Panc1 (cell line): ENCODE measurements at regions of chr12 and their contacts with region 1.

Region 1: DNA sequence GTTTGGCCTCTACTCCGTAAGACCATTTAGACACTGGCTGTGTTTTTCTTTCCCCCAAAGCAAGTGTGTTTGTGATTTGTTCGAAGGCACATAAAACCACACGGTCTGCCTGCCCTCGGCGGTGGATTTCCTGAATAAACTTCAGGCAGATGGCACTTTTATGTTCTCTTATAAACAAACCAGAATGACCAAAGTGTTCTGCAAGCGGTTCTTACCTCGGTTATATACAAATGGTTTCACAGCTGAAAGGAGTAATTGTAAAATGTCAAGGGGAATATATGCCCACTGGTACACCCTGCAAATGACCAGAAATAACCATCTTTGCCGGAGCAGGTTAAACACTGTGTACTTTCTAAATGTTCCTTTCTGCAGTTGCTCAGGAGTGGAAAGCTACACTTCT is 1475.8 kb upstream of the TMEM132C start:
- DNase-seq: no peak
- ATAC-seq: no peak
- H3K4me3 ChIP-seq: no peak overlapping the region
- H3K27ac ChIP-seq: no peak overlapping the region
- H3K4me1 ChIP-seq: no peaks in the 10 kb centered on the region
- H3K27me3 ChIP-seq: no peaks in the 10 kb centered on the region
- CTCF ChIP-seq: no peak

Region 2: GRCh38 chr12:126856958-126857357 is 65.8 kb after region 1 on chr12:
- CTCF ChIA-PET with region 1: interaction called, 10 read pairs
- POLR2A ChIA-PET with region 1: no interaction called
- in situ Hi-C with region 1: no loop called
- intact Hi-C with region 1: no loop called
- DNase-seq: no peak
- ATAC-seq: no peak
- H3K4me3 ChIP-seq: no peak overlapping the region
- H3K27ac ChIP-seq: no peak overlapping the region
- H3K4me1 ChIP-seq: no peaks in the 10 kb centered on the region
- H3K27me3 ChIP-seq: no peaks in the 10 kb centered on the region
- CTCF ChIP-seq: no peak

Region 3: DNA sequence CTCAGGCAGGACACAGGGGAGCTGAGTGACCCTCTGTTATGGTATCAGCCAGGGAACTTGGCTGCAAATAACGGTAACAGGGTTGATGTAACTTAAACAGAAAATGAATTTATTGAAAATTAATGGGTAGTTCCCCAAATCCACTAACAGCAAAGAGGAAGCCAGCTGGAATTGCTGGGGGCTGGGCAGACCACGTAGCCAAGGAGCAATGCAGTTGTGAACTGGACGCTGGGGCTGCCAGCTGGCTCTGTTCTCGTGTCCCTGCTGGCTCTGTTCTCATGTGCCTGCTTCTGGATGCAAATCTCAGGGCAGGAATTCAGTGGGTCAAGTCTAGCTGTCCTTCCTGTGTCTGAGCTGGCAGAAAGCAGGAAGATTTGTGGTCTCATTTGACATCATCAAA is 92.6 kb after region 1 on chr12:
- CTCF ChIA-PET with region 1: no interaction called
- POLR2A ChIA-PET with region 1: no interaction called
- in situ Hi-C with region 1: no loop called
- intact Hi-C with region 1: no loop called
- DNase-seq: no peak
- ATAC-seq: no peak
- H3K4me3 ChIP-seq: no peak overlapping the region
- H3K27ac ChIP-seq: no peak overlapping the region
- H3K4me1 ChIP-seq: no peaks in the 10 kb centered on the region
- H3K27me3 ChIP-seq: no peaks in the 10 kb centered on the region
- CTCF ChIP-seq: no peak